Left cardiac atrium (tissue), 4 donors: ENCODE measurements at regions of chr3 and their contacts with region 1.

Region 1: GRCh38 chr3:154252759-154253638 is 71.3 kb downstream of the DHX36 start:
- DNase-seq: peak; percentile 92
- ATAC-seq: peak; percentile 93 to 95

Region 2: GRCh38 chr3:153026026-153026425 is 1227.0 kb before region 1 on chr3:
- intact Hi-C with region 1: loop called in 1 of 2 experiments (anchors 5 kb)
- DNase-seq: no peak
- ATAC-seq: no peak

Region 3: GRCh38 chr3:154095832-154096421 is 157.1 kb before region 1 on chr3:
- intact Hi-C with region 1: loop called (anchors 5 to 10 kb)
- DNase-seq: no peak
- ATAC-seq: no peak

Region 4: GRCh38 chr3:154334973-154335420 is 82.0 kb after region 1 on chr3:
- intact Hi-C with region 1: no loop called
- DNase-seq: no peak
- ATAC-seq: no peak

Region 5: DNA sequence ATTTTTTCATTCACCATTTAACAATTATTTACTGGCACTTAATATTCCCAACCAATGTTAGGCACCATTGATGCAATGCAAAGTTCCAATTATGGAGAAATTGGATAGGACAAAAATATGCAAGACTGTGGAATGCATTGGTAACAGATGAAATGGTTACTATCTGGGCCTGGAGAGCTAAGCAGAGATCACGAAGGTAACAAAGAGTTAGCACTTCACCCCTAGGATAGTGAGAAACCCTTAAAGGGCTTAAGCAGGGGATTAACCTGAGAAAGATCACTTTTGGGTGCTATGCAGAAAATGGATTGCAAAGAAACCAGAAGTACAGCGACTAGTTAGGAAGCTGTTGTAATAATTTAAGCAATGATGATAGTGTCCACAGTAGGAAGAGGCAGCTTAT is 306.6 kb after region 1 on chr3:
- intact Hi-C with region 1: no loop called
- DNase-seq: no peak
- ATAC-seq: no peak